K562 (cell line): ENCODE measurements at regions of chr15 and their contacts with region 1.

Region 1: DNA sequence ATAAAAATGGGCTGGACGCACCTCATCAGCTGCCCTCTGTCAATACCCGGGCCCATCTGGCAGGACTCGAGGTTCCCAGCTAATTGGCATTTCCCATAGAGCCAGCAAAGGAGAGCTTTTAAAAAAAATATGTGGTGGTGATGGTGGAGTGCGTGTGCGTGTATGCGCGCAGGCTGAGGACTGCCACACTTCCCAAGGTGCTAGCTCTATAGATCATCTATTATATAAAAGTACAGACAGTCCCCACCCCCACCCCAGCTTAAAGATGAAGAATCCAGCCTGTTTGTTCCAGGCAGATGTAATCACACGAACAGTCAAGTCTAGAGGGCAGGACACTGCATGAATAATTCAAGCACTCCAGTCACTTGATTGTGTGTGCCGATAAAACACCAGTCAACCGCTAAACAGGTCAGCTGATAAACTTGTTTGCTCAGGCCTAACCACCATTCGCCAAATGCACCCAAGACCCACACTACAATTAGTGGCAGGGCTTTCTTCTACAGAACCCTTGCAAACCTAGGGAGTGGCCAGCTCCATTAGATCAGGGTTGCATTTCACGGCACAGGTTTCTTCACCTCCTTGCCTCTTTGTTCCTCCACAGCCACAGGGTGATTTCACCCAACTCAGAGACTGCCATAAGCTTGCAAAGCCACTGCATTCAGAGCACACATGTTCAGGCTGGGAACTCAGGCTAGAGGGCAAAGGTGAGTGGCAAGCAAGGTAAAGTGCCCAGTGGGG is 5.8 kb downstream of the TLE3 start:
- DNase-seq: peak in 3 of 4 experiments; percentile 47 to 78 (median 58)
- ATAC-seq: peak; percentile 36
- H3K4me3 ChIP-seq: no peak overlapping the region
- H3K27ac ChIP-seq: peak overlapping the region; percentile 53; the same call in 2 of the 3 replicates
- H3K4me1 ChIP-seq: peaks cover 58 to 87% of the 10 kb centered on the region in 2 experiments
- H3K27me3 ChIP-seq: no peaks in the 10 kb centered on the region
- CTCF ChIP-seq: no peak
- EP300 ChIP-seq: peak; percentile 92
- POLR2A ChIP-seq: no peak
- RAD21 ChIP-seq: no peak

Region 2: DNA sequence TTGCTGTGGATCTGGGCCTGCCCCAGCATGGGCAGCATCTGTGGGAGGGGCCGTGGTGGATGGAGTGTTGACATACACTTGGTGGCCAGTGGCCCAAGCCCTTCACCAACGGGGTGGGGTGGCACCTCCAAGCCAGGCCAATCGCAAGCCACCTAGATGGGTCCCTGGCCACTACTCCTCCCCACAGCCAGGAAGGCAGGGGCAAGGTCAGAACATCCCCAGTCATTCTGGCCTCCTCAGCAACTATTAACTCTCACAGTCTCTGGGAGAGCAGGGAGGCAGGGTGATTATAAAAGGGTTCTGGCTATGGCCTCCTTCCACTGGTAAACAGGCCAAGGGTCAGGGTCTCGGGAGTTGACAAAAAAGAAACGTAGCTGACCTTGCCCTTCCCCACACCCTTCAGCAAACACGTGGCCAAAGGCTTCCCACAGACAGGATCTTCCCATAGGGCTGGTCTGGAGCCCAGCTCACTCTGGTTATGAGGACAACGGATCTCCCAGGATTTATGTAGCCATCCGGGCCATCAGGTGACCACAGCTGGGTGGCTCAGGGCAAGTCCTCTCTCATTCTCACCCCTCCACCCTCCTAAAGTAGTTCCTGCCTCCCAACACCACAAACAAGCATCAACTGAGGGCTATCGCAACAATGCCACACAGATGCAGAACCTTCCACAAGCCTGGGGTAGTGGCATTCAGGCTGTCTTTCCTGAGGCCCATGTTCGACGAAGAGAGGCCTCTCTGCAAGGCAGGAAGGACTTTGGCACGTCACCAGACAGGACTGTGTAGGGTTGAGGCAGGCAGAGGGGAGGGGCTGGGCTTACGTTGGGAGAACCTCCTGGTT is 13.1 kb before region 1 on chr15:
- CTCF ChIA-PET with region 1: no interaction called
- POLR2A ChIA-PET with region 1: interaction called, 11 read pairs
- in situ Hi-C with region 1: no loop called
- intact Hi-C with region 1: no loop called
- DNase-seq: peak in 1 of 4 experiments; percentile 38
- ATAC-seq: peak; percentile 13
- H3K4me3 ChIP-seq: no peak overlapping the region
- H3K27ac ChIP-seq: no peak overlapping the region
- H3K4me1 ChIP-seq: peaks cover 4 to 5% of the 10 kb centered on the region in 2 experiments; a peak in 3 of 5 replicates
- H3K27me3 ChIP-seq: no peaks in the 10 kb centered on the region
- CTCF ChIP-seq: no peak
- EP300 ChIP-seq: no peak
- POLR2A ChIP-seq: no peak
- RAD21 ChIP-seq: no peak

Region 3: GRCh38 chr15:70281811-70282307 is 190.0 kb after region 1 on chr15:
- CTCF ChIA-PET with region 1: no interaction called
- POLR2A ChIA-PET with region 1: no interaction called
- in situ Hi-C with region 1: no loop called
- intact Hi-C with region 1: no loop called
- DNase-seq: no peak
- ATAC-seq: no peak
- H3K4me3 ChIP-seq: no peak overlapping the region
- H3K27ac ChIP-seq: no peak overlapping the region
- H3K4me1 ChIP-seq: no peaks in the 10 kb centered on the region
- H3K27me3 ChIP-seq: peaks cover 0 to 10% of the 10 kb centered on the region in 2 experiments; a peak in 2 of 5 replicates
- CTCF ChIP-seq: no peak
- EP300 ChIP-seq: no peak
- POLR2A ChIP-seq: no peak
- RAD21 ChIP-seq: no peak